WTC11 (cell line): ENCODE measurements at regions of chr19 and their contacts with region 1.

Region 1: GRCh38 chr19:28878862-28879566 is 333.9 kb downstream of the UQCRFS1 start:
- DNase-seq: peak; percentile 76
- ATAC-seq: peak; percentile 62
- H3K4me3 Mint-ChIP-seq: no peak overlapping the region
- H3K27ac Mint-ChIP-seq: no peak overlapping the region
- H3K4me1 Mint-ChIP-seq: peaks cover 52% of the 10 kb centered on the region
- H3K27me3 Mint-ChIP-seq: peaks cover 19% of the 10 kb centered on the region
- CTCF ChIP-seq: peak; percentile 82

Region 2: GRCh38 chr19:28324275-28325060 is 554.5 kb before region 1 on chr19:
- CTCF ChIA-PET with region 1: interaction called, 11 read pairs
- POLR2A ChIA-PET with region 1: no interaction called
- DNase-seq: no peak
- ATAC-seq: peak; percentile 78
- H3K4me3 Mint-ChIP-seq: no peak overlapping the region
- H3K27ac Mint-ChIP-seq: no peak overlapping the region
- H3K4me1 Mint-ChIP-seq: peaks cover 33% of the 10 kb centered on the region
- H3K27me3 Mint-ChIP-seq: peaks cover 8% of the 10 kb centered on the region
- CTCF ChIP-seq: no peak

Region 3: DNA sequence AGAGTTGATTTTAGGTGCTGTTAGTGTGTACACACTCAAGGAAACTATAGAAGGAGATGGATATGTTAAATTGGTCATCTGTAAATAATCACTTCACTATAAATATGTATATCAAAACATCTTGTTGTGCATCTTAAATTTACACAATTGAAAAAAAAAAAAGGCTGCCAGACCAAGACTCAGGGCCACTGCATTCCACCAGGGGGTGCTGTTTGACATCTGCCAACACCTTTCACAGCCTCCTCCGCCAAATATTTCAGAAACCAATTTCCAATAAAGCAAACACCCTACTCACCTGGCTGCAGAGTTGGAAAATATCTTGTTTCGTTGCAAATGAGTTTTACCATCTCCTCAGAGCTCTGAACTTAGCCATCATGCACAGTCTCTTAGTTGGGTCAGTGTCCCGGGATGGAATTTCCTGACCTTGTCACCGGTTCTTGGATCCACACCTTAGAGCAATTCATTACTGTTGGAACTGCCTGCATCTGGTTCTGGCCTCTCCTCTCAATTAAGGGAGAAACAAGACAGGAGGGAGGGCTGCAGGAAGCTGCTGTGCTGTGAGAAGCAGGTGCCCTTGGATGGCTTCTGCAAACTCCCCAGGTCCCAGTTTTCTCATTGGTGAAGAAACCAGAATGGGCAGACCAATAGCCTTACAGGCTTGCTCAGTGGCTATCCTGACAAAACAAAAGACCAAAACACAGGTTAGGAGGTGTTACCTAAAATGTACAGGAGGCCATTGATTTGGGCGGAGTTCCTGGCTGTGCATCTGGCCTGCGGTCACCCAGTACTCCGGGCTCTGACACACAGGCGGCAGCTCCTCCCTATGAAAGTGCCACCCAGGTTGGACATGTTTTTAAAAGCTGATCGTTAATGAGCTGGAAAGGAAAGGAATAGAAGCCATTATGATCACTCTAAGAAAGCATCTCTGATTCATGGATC is 412.6 kb before region 1 on chr19:
- CTCF ChIA-PET with region 1: interaction called, 16 read pairs
- POLR2A ChIA-PET with region 1: no interaction called
- DNase-seq: peak; percentile 79
- ATAC-seq: peak; percentile 28
- H3K4me3 Mint-ChIP-seq: no peak overlapping the region
- H3K27ac Mint-ChIP-seq: no peak overlapping the region
- H3K4me1 Mint-ChIP-seq: peaks cover 32% of the 10 kb centered on the region
- H3K27me3 Mint-ChIP-seq: no peaks in the 10 kb centered on the region
- CTCF ChIP-seq: peak; percentile 83

Region 4: DNA sequence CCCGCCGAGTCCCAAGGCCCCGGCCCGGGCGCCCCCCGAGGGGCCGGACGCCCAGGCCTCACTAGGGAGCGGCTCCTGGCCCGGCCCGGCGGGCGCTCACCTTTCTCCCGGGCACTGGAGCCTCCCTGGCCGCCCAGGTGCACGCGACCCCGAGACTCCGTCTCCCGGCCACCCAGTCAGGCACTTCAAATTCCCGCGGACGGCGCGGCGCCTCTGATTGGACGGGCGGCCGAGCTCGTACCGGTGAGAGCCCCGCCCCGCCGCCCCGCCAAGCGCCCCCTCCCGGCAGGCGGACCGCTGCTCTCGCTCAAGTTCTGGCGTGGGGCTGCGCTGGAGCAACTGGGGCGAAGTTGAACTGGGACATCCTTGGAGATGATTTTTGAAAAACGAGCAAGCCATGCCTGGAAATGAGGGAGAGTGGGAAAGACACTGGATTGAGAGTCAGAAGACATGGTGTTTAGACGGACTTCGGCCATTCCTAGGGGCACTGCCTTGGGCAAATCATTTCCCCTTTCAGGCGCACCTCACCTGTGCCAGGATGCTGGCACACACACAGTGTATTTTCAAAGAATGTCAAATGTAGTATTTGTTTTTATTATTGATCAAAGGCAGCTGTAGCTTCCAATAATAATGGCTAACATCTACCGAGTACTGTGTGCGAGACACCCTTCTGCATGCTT is 151.4 kb before region 1 on chr19:
- CTCF ChIA-PET with region 1: interaction called, 28 read pairs
- POLR2A ChIA-PET with region 1: no interaction called
- DNase-seq: peak; percentile 89
- ATAC-seq: peak; percentile 94
- H3K4me3 Mint-ChIP-seq: peak overlapping the region; percentile 79
- H3K27ac Mint-ChIP-seq: no peak overlapping the region
- H3K4me1 Mint-ChIP-seq: peaks cover 12% of the 10 kb centered on the region
- H3K27me3 Mint-ChIP-seq: peaks cover 30% of the 10 kb centered on the region
- CTCF ChIP-seq: no peak

Region 5: GRCh38 chr19:28737021-28737895 is 141.8 kb before region 1 on chr19:
- CTCF ChIA-PET with region 1: interaction called, 95 read pairs
- POLR2A ChIA-PET with region 1: no interaction called
- DNase-seq: no peak
- ATAC-seq: peak; percentile 51
- H3K4me3 Mint-ChIP-seq: no peak overlapping the region
- H3K27ac Mint-ChIP-seq: peak overlapping the region; percentile 53
- H3K4me1 Mint-ChIP-seq: peaks cover 12% of the 10 kb centered on the region
- H3K27me3 Mint-ChIP-seq: peaks cover 3% of the 10 kb centered on the region; the same call in 1 of the 2 replicates
- CTCF ChIP-seq: peak; percentile 29; the same call in 1 of the 2 replicates

Region 6: GRCh38 chr19:28858933-28859332 is 20.1 kb before region 1 on chr19:
- CTCF ChIA-PET with region 1: interaction called, 15 read pairs
- POLR2A ChIA-PET with region 1: no interaction called
- DNase-seq: no peak
- ATAC-seq: no peak
- H3K4me3 Mint-ChIP-seq: no peak overlapping the region
- H3K27ac Mint-ChIP-seq: no peak overlapping the region
- H3K4me1 Mint-ChIP-seq: no peaks in the 10 kb centered on the region
- H3K27me3 Mint-ChIP-seq: peaks cover 3% of the 10 kb centered on the region; the same call in 1 of the 2 replicates
- CTCF ChIP-seq: no peak